ENCODE measurements at regions of chr18 and their contacts with region 1.

Region 1: GRCh38 chr18:32048507-32049091 is 30.0 kb downstream of the RNF125 start:
- DNase-seq: no peak
- H3K4me3 Mint-ChIP-seq: no peak overlapping the region
- H3K27ac Mint-ChIP-seq: peak overlapping the region; percentile 91
- H3K4me1 Mint-ChIP-seq: peaks cover 53% of the 10 kb centered on the region
- H3K27me3 Mint-ChIP-seq: no peaks in the 10 kb centered on the region

Region 2: GRCh38 chr18:31942999-31943865 is 105.4 kb before region 1 on chr18 and contains the start of gene TRAPPC8:
- CTCF ChIA-PET with region 1: interaction called, 7 read pairs
- POLR2A ChIA-PET with region 1: interaction called, 14 read pairs
- DNase-seq: peak; percentile 94
- H3K4me3 Mint-ChIP-seq: peak within 1 kb of the TSS; percentile 100
- H3K27ac Mint-ChIP-seq: peak within 1 kb of the TSS; percentile 98
- H3K4me1 Mint-ChIP-seq: peaks cover 51% of the 10 kb centered on the region
- H3K27me3 Mint-ChIP-seq: no peaks in the 10 kb centered on the region
- total RNA-seq, gene TRAPPC8: 40.1 to 42.7 TPM

Region 3: GRCh38 chr18:31996007-31996406 is 52.6 kb before region 1 on chr18:
- CTCF ChIA-PET with region 1: no interaction called
- POLR2A ChIA-PET with region 1: no interaction called
- DNase-seq: no peak
- H3K4me3 Mint-ChIP-seq: no peak overlapping the region
- H3K27ac Mint-ChIP-seq: no peak overlapping the region
- H3K4me1 Mint-ChIP-seq: no peaks in the 10 kb centered on the region
- H3K27me3 Mint-ChIP-seq: peaks cover 2% of the 10 kb centered on the region

Region 4: GRCh38 chr18:32026491-32027086 is 22.0 kb before region 1 on chr18:
- CTCF ChIA-PET with region 1: interaction called, 64 read pairs
- POLR2A ChIA-PET with region 1: interaction called, 11 read pairs
- DNase-seq: no peak
- H3K4me3 Mint-ChIP-seq: peak overlapping the region; percentile 59
- H3K27ac Mint-ChIP-seq: peak overlapping the region; percentile 78
- H3K4me1 Mint-ChIP-seq: peaks cover 78% of the 10 kb centered on the region
- H3K27me3 Mint-ChIP-seq: no peaks in the 10 kb centered on the region

Region 5: DNA sequence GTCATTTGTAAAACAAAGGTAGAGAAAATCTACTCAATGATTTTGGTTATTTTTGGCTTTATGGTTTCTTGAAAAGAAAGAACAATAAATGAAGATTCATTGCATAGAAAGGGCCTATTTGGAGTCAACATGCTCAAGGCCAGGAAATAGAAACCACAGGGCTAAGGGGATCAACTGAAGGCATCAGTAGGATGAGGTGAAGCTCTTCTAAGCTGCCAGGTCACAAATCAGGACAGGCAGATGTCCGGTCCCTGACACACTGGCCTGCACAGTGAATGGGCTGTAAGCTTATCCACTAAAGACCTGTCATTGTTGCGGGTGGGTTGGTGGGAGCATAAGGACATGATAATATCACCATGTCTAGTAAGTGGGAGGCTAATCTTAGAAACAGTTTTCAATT is 11.4 kb after region 1 on chr18:
- CTCF ChIA-PET with region 1: interaction called, 7 read pairs
- POLR2A ChIA-PET with region 1: interaction called, 14 read pairs
- DNase-seq: no peak
- H3K4me3 Mint-ChIP-seq: no peak overlapping the region
- H3K27ac Mint-ChIP-seq: no peak overlapping the region
- H3K4me1 Mint-ChIP-seq: peaks cover 40% of the 10 kb centered on the region
- H3K27me3 Mint-ChIP-seq: no peaks in the 10 kb centered on the region

Region 6: GRCh38 chr18:32086861-32087260 is 38.3 kb after region 1 on chr18:
- CTCF ChIA-PET with region 1: interaction called, 5 read pairs
- POLR2A ChIA-PET with region 1: interaction called, 31 read pairs
- DNase-seq: no peak
- H3K4me3 Mint-ChIP-seq: no peak overlapping the region
- H3K27ac Mint-ChIP-seq: peak overlapping the region; percentile 5
- H3K4me1 Mint-ChIP-seq: peaks cover 43% of the 10 kb centered on the region
- H3K27me3 Mint-ChIP-seq: peaks cover 2% of the 10 kb centered on the region

Region 7: DNA sequence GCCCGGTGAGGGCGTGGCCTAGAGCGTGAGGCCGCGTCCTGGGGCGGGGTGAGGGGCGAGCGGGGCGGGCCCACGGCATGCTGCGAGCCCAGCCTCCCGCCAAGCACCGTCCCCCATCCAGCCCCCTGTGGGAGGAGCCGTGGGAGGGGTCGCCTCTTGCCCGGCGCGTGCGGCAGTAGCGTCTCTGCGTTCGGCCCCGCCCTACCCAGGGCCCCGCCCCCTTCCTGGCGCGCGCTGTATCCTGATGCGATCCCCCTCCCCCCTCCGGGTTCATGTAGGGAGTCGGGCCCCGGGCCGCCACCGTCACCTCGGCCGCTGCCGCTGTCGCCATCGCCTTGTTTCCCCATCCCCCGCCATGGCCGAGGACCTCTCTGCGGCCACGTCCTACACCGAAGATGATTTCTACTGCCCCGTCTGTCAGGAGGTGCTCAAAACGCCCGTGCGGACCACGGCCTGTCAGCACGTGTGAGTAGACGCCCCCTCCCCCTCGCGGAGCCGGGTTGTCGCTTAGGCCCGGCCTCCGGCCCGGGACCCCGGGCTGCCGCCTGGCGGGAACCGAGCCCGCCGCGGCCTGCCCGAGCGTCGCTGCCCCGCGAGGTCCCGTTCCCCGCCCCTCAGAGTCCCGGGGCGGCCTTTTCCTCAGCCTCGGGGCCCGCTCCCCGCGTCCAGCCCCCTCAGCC is 44.0 kb after region 1 on chr18:
- CTCF ChIA-PET with region 1: interaction called, 4 read pairs
- POLR2A ChIA-PET with region 1: interaction called, 31 read pairs
- DNase-seq: peak; percentile 99
- H3K4me3 Mint-ChIP-seq: peak overlapping the region; percentile 96
- H3K27ac Mint-ChIP-seq: peak overlapping the region; percentile 97
- H3K4me1 Mint-ChIP-seq: peaks cover 47% of the 10 kb centered on the region
- H3K27me3 Mint-ChIP-seq: no peaks in the 10 kb centered on the region

Region 8: GRCh38 chr18:32114293-32114942 is 65.8 kb after region 1 on chr18:
- CTCF ChIA-PET with region 1: no interaction called
- POLR2A ChIA-PET with region 1: no interaction called
- DNase-seq: no peak
- H3K4me3 Mint-ChIP-seq: no peak overlapping the region
- H3K27ac Mint-ChIP-seq: no peak overlapping the region
- H3K4me1 Mint-ChIP-seq: peaks cover 34% of the 10 kb centered on the region
- H3K27me3 Mint-ChIP-seq: no peaks in the 10 kb centered on the region